ENCODE measurements at regions of chr12 and their contacts with region 1.

Region 1: DNA sequence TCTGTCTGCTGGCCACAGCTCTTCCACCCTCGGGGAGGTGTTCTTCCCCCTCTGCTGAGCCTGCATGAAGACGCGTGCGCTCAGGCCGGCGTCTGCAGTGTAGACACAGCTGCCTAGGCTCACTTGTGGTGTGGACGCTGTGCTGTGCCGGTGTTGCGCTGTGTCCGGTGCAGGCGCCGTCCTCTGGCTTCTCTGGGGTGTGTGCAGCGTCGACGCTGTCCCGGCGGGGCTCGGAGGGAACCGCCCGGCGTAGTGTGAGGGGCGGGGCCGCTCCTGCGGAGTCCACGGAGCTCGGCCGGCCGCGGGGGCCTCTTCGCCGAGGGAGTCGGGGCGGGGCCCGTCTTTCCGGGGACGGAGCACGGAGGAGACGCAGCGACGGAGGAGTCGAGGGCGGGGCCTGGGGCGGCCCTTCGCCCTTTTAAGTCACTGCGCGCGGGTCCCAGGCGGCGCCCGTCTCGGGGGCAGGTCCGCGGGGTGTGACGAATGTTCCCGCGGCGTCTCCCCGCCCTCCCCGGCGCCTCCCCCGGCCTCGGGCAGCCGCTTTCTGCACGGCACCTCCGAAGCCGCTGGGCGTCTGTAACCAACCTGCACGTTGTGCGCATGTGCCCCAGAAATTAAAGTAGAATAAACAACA is 45.2 kb downstream of the NOC4L start:
- DNase-seq: peak; percentile 90 to 96 (median 94)
- H3K4me3 ChIP-seq: peak overlapping the region; percentile 82
- H3K4me3 Mint-ChIP-seq: peak overlapping the region; percentile 86 to 95 (median 93)
- H3K27ac ChIP-seq: peak overlapping the region; percentile 67
- H3K27ac Mint-ChIP-seq: peak overlapping the region; percentile 89 to 98 (median 97)
- H3K4me1 ChIP-seq: peaks cover 35% of the 10 kb centered on the region
- H3K4me1 Mint-ChIP-seq: peaks cover 32 to 65% (median 44%) of the 10 kb centered on the region in 3 donors
- H3K27me3 ChIP-seq: no peaks in the 10 kb centered on the region
- H3K27me3 Mint-ChIP-seq: peaks cover 0 to 4% of the 10 kb centered on the region in 2 donors

Region 2: DNA sequence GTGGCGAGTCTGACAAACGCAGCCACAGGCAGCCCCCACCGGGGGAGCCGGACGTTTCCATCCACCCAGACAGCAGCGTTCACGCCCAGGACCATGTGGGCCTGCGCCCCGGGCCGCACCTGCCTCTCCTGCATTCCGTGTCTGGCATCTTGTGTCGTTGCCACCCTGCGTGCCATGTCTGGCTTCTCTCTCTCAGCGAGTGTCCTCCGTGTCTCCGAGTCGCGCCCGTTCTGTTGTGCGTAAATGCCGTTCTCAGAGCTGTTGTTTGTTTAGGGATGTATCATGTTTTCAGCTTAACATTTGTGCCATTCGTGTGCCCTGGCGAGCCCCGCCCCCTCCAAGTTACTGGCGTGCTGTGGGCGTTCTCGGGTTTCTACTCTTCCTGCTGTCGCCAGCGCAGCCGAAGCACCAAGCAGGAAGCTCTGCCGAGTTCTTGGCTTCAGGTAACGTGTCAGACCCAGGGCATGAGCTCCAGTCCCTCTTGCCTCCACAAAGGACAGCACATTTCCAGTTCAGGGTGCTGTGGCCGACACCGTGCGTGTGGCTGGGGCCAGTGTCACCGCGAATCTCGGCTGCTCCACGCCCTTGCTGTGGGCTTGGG is 10.6 kb before region 1 on chr12:
- CTCF ChIA-PET with region 1: interaction called, 7 read pairs
- POLR2A ChIA-PET with region 1: interaction called, 16 read pairs
- DNase-seq: peak in 2 of 5 donors; percentile 32 to 62
- H3K4me3 ChIP-seq: no peak overlapping the region
- H3K4me3 Mint-ChIP-seq: peak overlapping the region; percentile 32 to 82 (median 79)
- H3K27ac ChIP-seq: no peak overlapping the region
- H3K27ac Mint-ChIP-seq: peak overlapping the region in 7 of 8 donors; percentile 36 to 85 (median 69)
- H3K4me1 ChIP-seq: peaks cover 24% of the 10 kb centered on the region
- H3K4me1 Mint-ChIP-seq: peaks cover 11 to 23% (median 14%) of the 10 kb centered on the region in 3 donors
- H3K27me3 ChIP-seq: peaks cover 10% of the 10 kb centered on the region
- H3K27me3 Mint-ChIP-seq: peaks cover 8 to 11% of the 10 kb centered on the region in 2 donors